ENCODE measurements at regions of chr5 and their contacts with region 1.

Region 1: DNA sequence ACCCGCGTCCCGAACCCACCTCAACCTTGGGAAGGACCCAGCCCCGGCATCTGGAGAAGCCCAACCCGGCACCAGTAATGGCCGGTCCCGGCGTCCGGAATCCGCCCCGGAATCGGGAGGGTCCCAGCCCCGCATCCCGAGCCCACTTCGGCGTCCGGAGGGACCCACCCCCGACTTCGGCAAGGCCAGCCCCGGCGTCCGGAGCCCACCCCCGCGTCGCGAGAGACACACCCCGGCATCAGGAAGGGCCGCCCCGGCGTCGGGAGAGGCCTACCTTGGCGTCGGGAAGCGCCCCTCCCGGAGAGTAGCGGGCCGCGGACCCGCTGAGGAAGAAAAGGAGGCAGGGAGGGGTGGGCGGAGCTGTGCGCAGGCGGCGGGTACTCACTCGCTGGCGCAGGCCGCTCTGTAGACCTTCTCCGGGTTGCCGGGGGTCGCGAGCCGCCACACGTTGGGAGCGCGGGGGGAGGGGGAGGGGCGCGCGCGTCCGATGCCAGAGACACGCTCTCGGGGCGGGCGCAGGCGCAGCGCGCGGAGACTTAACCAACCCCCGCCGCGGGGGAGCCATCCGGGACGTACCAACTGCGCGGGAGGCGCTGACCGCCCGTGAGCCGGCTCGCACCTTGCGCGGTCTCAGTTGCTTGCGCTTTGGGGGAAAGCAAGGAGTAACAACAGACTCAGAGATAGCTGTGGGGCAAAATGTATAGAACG is at the start of gene UIMC1:
- DNase-seq: peak; percentile 93
- H3K4me3 Mint-ChIP-seq: peak within 1 kb of the TSS; percentile 93
- H3K27ac Mint-ChIP-seq: peak within 1 kb of the TSS; percentile 92
- H3K4me1 Mint-ChIP-seq: peaks cover 33% of the 10 kb centered on the region
- H3K27me3 Mint-ChIP-seq: no peaks in the 10 kb centered on the region
- total RNA-seq, gene UIMC1: 46.5 to 50.5 TPM

Region 2: GRCh38 chr5:176934309-176934930 is 72.0 kb before region 1 on chr5:
- CTCF ChIA-PET with region 1: no interaction called
- POLR2A ChIA-PET with region 1: no interaction called
- DNase-seq: no peak
- H3K4me3 Mint-ChIP-seq: no peak overlapping the region
- H3K27ac Mint-ChIP-seq: no peak overlapping the region
- H3K4me1 Mint-ChIP-seq: peaks cover 6% of the 10 kb centered on the region
- H3K27me3 Mint-ChIP-seq: no peaks in the 10 kb centered on the region

Region 3: DNA sequence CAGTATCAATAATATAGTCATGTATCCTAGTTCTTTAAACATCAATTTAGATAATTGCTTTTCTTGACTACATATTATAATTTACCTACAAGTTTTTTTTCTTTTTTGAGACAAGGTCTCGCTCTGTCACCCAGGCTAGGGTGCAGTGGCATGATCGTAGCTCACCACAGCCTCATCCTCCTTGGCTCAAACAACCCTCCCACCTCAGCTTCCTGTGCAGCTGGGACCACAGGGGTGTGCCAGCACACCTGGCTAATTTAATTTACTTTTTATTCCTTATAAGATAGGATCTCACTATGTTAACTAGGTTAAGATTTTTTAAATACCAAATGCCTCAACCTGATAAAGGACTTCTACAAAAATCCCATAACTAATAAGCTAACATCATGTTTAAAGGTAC is 20.9 kb before region 1 on chr5:
- CTCF ChIA-PET with region 1: interaction called, 8 read pairs
- POLR2A ChIA-PET with region 1: interaction called, 12 read pairs
- DNase-seq: peak; percentile 62
- H3K4me3 Mint-ChIP-seq: no peak overlapping the region
- H3K27ac Mint-ChIP-seq: peak overlapping the region; percentile 67
- H3K4me1 Mint-ChIP-seq: peaks cover 31% of the 10 kb centered on the region
- H3K27me3 Mint-ChIP-seq: no peaks in the 10 kb centered on the region

Region 4: DNA sequence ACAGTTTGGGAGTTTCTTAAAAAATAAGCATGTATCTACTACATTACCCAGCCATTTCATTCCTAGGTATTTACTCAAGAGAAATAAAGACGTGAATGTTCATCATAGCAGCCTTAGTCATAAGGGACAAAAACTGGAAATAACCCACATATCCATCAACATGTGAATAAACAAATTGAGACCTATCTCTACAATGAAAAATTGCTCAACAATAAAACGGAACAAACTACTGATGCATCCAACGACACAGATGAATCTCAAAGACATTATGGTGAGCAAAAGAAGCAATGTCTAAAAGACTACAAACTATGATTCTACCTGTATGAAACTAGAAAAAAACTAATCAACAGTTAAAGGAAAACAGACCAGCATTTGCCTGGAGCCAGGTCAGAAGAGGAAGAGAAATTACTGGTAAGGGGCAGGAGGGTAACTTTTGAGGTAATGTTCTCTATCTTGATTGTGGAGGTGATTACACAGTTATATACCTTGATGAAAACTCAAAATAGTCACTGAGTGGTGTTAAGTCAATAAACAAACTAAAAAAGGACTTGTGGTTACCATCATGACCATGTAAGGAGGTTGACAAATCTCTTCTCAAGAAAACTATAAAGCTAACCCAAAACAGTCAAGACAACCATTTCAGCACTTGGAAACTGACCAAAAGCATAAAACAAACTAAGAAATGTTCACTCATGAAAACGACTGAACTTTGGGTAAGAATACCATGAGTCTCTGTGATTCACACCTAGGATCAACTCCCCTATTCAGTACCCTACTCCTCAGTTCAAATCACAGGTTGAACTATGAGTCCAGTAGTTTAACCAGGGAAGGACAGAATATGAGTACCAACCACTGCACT is 10.3 kb before region 1 on chr5:
- CTCF ChIA-PET with region 1: interaction called, 10 read pairs
- POLR2A ChIA-PET with region 1: interaction called, 5 read pairs
- DNase-seq: no peak
- H3K4me3 Mint-ChIP-seq: no peak overlapping the region
- H3K27ac Mint-ChIP-seq: peak overlapping the region; percentile 51
- H3K4me1 Mint-ChIP-seq: peaks cover 35% of the 10 kb centered on the region
- H3K27me3 Mint-ChIP-seq: no peaks in the 10 kb centered on the region

Region 5: GRCh38 chr5:177022384-177023308 is 16.2 kb after region 1 on chr5 and contains the start of gene ZNF346:
- CTCF ChIA-PET with region 1: interaction called, 16 read pairs
- POLR2A ChIA-PET with region 1: interaction called, 76 read pairs
- DNase-seq: peak; percentile 95
- H3K4me3 Mint-ChIP-seq: peak within 1 kb of the TSS; percentile 98
- H3K27ac Mint-ChIP-seq: peak within 1 kb of the TSS; percentile 88
- H3K4me1 Mint-ChIP-seq: peaks cover 38% of the 10 kb centered on the region
- H3K27me3 Mint-ChIP-seq: no peaks in the 10 kb centered on the region
- total RNA-seq, gene ZNF346: 19.5 to 27.2 TPM